ENCODE measurements at regions of chr7 and their contacts with region 1.

Region 1: GRCh38 chr7:2109936-2110585 is 122.7 kb downstream of the MAD1L1 start:
- DNase-seq: peak in 1 of 2 donors; percentile 54
- ATAC-seq: peak; percentile 64 to 75 (median 72)
- H3K4me3 ChIP-seq: no peak overlapping the region
- H3K27ac ChIP-seq: peak overlapping the region; percentile 7
- H3K4me1 ChIP-seq: peaks cover 22% of the 10 kb centered on the region
- H3K27me3 ChIP-seq: no peaks in the 10 kb centered on the region
- CTCF ChIP-seq: no peak

Region 2: DNA sequence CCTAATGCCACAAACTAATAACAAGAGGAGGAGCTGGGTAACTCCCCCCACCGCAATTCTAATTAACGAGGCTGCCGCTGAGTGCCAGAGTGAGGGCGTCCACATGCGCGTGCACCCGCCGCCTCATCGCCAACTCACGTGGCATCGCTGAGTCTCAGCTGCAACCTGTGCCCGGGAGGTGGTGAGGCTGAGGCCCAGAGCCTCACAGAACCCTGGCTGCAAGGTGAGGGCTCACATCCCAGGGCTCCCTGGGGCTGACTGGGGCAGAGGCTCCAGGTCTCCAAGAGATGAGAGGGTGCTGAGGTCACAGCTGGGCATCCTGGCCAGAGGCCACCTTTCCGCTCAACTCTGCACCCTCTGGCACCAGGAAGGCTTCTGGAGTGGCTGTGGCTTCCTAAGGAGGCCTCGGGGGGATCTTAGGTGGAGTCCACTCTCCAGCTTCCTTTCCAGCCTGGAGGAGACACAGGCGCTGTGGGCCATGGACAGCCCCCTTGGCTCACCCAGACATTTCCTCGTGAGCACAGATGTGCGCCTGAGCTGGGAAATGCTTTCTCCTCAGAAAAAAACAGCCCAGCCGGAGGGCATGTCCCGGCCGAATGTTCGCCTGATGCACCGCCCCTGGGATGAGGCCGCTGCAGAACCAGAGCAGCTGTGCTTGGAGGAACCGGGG is 119.9 kb before region 1 on chr7:
- intact Hi-C with region 1: no loop called
- DNase-seq: peak in 1 of 2 donors; percentile 63
- ATAC-seq: peak in 1 of 4 donors; percentile 20
- H3K4me3 ChIP-seq: no peak overlapping the region
- H3K27ac ChIP-seq: no peak overlapping the region
- H3K4me1 ChIP-seq: peaks cover 21% of the 10 kb centered on the region
- H3K27me3 ChIP-seq: no peaks in the 10 kb centered on the region
- CTCF ChIP-seq: no peak

Region 3: DNA sequence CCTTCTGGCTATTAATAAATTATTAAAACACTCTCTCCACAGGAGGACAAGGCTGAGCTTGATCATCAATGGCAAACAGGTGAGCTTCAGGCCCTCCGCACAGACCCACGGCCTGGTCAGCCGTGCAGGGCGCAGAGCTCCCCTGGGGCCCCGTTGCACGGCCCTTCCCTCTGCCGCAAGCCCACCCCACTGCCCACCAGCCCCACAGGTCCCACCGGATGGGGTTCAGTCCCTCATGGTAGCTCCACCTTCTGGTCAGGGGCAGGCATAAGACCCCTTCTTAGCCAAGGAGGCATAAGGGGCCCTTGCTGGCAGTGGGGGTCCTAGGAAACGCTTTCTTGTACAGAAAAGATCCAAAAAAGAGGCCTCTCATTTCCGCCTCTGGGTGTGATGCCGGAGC is 38.1 kb after region 1 on chr7:
- intact Hi-C with region 1: loop called in 1 of 2 experiments (anchors 5 kb)
- DNase-seq: no peak
- ATAC-seq: no peak
- H3K4me3 ChIP-seq: no peak overlapping the region
- H3K27ac ChIP-seq: no peak overlapping the region
- H3K4me1 ChIP-seq: peaks cover 27% of the 10 kb centered on the region
- H3K27me3 ChIP-seq: no peaks in the 10 kb centered on the region
- CTCF ChIP-seq: no peak

Region 4: GRCh38 chr7:2190531-2190930 is 80.5 kb after region 1 on chr7:
- intact Hi-C with region 1: loop called in 1 of 2 experiments (anchors 5 kb)
- DNase-seq: no peak
- ATAC-seq: no peak
- H3K4me3 ChIP-seq: no peak overlapping the region
- H3K27ac ChIP-seq: no peak overlapping the region
- H3K4me1 ChIP-seq: peaks cover 31% of the 10 kb centered on the region
- H3K27me3 ChIP-seq: no peaks in the 10 kb centered on the region
- CTCF ChIP-seq: no peak

Measured in psoas muscle (tissue), 8 donors.